ENCODE measurements at regions of chr17 and their contacts with region 1.

Region 1: GRCh38 chr17:78186692-78187595 is at the starts of genes AFMID and TK1:
- DNase-seq: peak; percentile 100
- H3K4me3 ChIP-seq: peak within 1 kb of the TSS; percentile 54 to 78
- H3K27ac ChIP-seq: peak within 1 kb of the TSS; percentile 26 to 48; a peak in 2 of 4 replicates
- H3K4me1 ChIP-seq: peaks cover 7% of the 10 kb centered on the region in 2 experiments; a peak in 2 of 4 replicates
- H3K27me3 ChIP-seq: no peaks in the 10 kb centered on the region
- CTCF ChIP-seq: peak; percentile 85
- EP300 ChIP-seq: no peak
- RAD21 ChIP-seq: peak; percentile 35
- polyA plus RNA-seq, gene AFMID: 44.4 and 59.0 TPM in 2 replicates
- polyA plus RNA-seq, gene TK1: 70.7 and 112 TPM in 2 replicates

Region 2: DNA sequence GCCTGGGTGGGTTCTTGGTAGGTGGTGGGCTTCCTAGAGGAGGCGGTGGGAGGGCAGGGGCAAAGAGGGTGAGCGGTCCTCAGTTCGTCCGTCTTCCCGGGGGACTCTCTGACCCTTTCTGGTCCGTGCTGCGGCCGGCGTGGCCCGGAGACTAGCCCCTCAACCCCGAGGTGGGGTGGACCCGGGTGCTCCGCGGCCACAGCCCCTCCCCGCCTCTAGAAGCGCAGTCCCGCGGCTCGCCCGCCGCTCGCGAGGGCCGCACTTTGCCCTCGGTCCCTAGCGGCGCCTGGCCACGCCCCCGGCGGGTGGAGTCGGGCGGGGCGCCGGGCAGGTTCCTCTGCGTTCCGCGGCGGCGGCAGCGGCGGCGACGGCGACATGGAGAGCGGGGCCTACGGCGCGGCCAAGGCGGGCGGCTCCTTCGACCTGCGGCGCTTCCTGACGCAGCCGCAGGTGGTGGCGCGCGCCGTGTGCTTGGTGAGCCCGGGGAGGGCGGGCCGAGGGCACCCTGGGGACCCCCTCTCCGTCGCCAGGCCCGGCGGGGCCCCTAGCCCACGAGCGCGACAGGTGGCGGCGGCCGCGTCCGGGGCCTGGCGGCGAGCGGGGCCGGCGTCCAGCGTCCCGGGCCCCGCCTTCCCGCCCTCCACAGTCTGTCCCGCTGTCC is 18.6 kb before region 1 on chr17 and contains the start of gene SYNGR2:
- CTCF ChIA-PET with region 1: interaction called, 70 read pairs
- POLR2A ChIA-PET with region 1: interaction called, 7 read pairs
- DNase-seq: peak; percentile 99
- H3K4me3 ChIP-seq: peak within 1 kb of the TSS; percentile 71 to 85
- H3K27ac ChIP-seq: peak within 1 kb of the TSS in 1 of 2 experiments; percentile 64; a peak in 2 of 4 replicates
- H3K4me1 ChIP-seq: peaks cover 8 to 17% of the 10 kb centered on the region in 2 experiments; a peak in 2 of 4 replicates
- H3K27me3 ChIP-seq: no peaks in the 10 kb centered on the region
- CTCF ChIP-seq: no peak
- EP300 ChIP-seq: peak; percentile 24 to 31; a peak in 1 of 4 replicates
- RAD21 ChIP-seq: peak; percentile 18; the same call in 1 of the 2 replicates
- polyA plus RNA-seq, gene SYNGR2: 160 and 181 TPM in 2 replicates

Region 3: DNA sequence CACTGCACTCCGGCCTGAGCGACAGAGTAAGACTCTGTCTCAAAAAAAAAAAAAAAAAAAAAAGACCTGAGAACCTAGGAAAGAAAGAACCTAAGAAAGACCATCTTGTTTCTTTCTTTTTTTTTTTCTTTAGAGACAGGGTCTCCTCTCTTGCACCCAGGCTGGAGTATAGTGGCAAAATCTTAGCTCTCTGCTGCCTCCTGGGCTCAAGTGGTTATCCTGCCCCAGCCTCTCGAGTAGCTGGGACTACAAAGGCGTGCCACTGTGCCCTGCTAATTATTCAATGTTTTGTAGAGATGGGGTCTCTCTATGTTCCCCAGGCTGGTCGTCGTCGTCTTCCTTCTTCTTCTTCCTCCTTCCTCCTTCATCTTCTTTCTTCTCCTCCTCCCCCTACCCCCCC is 19.4 kb after region 1 on chr17:
- CTCF ChIA-PET with region 1: interaction called, 17 read pairs
- POLR2A ChIA-PET with region 1: interaction called, 5 read pairs
- DNase-seq: no peak
- H3K4me3 ChIP-seq: no peak overlapping the region
- H3K27ac ChIP-seq: no peak overlapping the region
- H3K4me1 ChIP-seq: no peaks in the 10 kb centered on the region; a peak in 1 of 4 replicates
- H3K27me3 ChIP-seq: no peaks in the 10 kb centered on the region
- CTCF ChIP-seq: peak; percentile 16; the same call in 1 of the 2 replicates
- EP300 ChIP-seq: no peak
- RAD21 ChIP-seq: no peak

Measured in SK-N-SH (cell line).